Astrocyte of the cerebellum (primary cell): ENCODE measurements at regions of chr20 and their contacts with region 1.

Region 1: GRCh38 chr20:41057999-41058896 is 29.6 kb downstream of the TOP1 start:
- DNase-seq: no peak
- H3K4me3 ChIP-seq: no peak overlapping the region
- CTCF ChIP-seq: no peak

Region 2: DNA sequence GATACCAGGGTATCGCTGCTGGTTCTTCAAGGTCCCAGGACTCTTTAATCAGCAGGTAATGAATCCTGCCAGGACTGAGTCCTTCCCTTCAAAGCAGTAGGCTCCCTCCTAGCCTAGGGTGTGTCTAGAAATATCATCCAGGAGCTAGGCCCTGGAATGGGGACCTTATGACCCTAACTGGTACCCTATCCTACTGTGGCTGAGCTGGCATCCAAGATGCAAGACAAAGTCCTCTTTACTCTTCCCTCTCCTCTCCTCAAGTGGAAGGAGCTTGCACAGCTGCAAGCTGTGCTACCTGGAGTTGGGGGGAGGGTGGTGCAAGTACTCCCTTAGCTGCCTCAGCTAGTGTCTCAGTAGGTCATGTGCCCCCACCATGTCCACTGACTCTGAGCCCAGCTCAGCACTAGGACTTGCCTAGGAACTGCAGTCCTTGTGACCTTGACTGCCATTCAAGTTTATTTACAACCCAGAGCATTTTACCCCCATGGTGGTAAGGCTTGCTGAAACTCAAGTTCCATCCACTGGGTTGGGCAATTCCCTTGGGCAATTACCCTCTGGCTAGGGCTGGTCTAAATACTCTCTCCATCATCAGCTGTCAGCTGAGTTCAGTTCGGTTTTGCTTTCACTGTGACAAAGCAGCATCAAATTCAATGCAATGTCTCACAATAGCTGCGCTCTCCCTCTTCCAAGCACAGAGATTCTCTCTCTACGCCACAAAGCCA is 78.0 kb before region 1 on chr20:
- in situ Hi-C with region 1: loop called (anchors 10 kb)
- DNase-seq: no peak
- H3K4me3 ChIP-seq: no peak overlapping the region
- CTCF ChIP-seq: no peak